ENCODE measurements at regions of chr2 and their contacts with region 1.

Region 1: DNA sequence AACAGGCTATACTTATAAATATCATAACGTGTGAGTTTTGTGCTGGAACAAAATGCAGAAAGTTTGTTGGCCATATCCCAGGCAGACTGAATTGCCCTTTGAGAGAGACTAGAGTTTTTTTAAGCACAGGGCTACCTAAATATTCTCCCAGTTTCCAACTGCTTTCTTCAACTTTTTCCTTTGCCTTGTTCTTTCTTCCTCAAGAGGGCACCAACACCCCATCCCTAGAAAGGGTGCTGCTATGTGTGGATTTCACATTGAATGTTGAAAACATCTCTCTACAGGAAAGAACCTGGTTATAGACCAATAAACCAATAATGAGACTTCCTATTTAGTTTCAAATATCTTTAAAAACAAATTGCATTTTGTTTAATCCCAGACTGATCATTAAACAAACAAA is 87.9 kb downstream of the ICOS start:
- DNase-seq: peak; percentile 68
- ATAC-seq: peak; percentile 78
- H3K4me3 ChIP-seq: no peak overlapping the region
- H3K27ac ChIP-seq: no peak overlapping the region
- H3K4me1 ChIP-seq: peaks cover 11% of the 10 kb centered on the region
- H3K27me3 ChIP-seq: no peaks in the 10 kb centered on the region
- CTCF ChIP-seq: peak; percentile 83

Region 2: DNA sequence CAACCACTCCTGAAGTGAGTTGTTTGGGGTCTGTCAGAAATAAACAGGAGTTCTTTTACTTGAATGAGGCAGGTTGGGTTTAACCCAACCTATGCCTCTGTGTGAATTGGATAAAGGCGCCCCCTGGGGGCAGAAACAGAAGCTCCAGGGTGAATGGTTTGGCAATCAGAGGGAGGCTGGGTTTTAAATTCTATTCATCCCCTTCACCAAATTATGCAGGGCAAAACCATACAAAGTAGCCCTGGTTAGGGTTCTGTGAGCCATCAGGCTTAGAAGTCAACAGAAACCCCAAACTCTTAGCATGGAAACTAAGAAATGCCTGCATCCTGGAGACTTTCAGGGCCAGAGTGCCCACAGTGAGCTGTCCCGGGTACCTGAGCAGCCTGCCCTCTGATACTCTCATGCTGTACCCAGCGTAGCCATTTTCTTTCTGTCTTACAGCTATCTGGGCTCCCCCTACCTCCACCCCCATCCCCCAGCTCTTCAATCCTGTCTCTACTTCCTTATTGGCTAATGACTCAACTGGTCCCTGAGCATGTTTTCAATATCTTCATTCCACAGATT is 153.6 kb after region 1 on chr2:
- CTCF ChIA-PET with region 1: no interaction called
- POLR2A ChIA-PET with region 1: no interaction called
- intact Hi-C with region 1: loop called (anchors 1 kb)
- DNase-seq: peak; percentile 47
- ATAC-seq: no peak
- H3K4me3 ChIP-seq: no peak overlapping the region
- H3K27ac ChIP-seq: no peak overlapping the region
- H3K4me1 ChIP-seq: no peaks in the 10 kb centered on the region; the same call in 1 of the 2 replicates
- H3K27me3 ChIP-seq: peaks cover 32% of the 10 kb centered on the region
- CTCF ChIP-seq: peak; percentile 79

Measured in PC-3 (cell line).